SK-N-SH (cell line): ENCODE measurements at regions of chr20 and their contacts with region 1.

Region 1: DNA sequence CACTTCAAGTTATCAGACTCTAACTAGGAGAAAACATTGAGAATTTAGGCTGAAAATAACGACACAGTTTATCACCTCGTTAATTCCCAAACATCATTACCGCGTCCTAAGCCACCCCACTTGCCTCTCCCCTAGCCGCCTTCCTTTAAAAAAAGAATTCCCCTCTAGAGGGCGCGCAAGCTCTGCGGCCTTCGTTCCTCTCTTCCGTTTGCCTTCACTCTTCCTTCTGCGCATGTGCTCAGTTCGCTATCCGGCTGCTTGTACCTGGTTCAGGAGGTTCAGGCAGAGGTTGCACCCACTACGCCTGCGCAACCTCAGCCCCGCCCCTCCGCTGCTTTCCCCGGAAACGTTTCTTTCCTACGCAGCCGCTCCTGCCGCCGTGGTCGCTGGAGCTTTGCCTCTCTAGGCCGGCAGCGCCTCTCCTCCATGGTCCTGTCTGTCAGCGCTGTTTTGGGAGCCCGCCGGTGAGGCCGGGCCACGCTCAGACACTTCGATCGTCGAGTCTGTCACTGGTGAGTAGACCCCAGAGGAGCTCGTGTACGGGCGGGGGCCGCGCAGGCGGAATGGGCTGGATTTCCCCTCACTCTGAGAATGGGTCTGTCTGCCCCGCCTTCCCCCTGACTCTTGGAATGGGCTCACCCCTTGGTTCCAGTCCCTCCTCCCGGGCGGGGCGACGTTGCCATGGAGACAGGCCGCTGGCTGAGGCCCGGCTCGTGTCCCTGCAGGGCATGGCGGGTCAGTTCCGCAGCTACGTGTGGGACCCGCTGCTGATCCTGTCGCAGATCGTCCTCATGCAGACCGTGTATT is at the start of gene SYS1:
- DNase-seq: peak; percentile 96
- H3K4me3 ChIP-seq: peak within 1 kb of the TSS; percentile 80 to 92
- H3K27ac ChIP-seq: peak within 1 kb of the TSS; percentile 91 to 97
- H3K4me1 ChIP-seq: peaks cover 0 to 11% of the 10 kb centered on the region in 2 experiments; a peak in 2 of 4 replicates
- H3K27me3 ChIP-seq: no peaks in the 10 kb centered on the region
- CTCF ChIP-seq: peak; percentile 88
- EP300 ChIP-seq: peak; percentile 13 to 15; a peak in 1 of 4 replicates
- RAD21 ChIP-seq: peak; percentile 87
- polyA plus RNA-seq, gene SYS1: 26.5 and 26.9 TPM in 2 replicates

Region 2: GRCh38 chr20:45322952-45323383 is 40.0 kb before region 1 on chr20:
- CTCF ChIA-PET with region 1: interaction called, 77 read pairs
- POLR2A ChIA-PET with region 1: interaction called, 4 read pairs
- DNase-seq: no peak
- H3K4me3 ChIP-seq: no peak overlapping the region
- H3K27ac ChIP-seq: no peak overlapping the region
- H3K4me1 ChIP-seq: peaks cover 0 to 8% of the 10 kb centered on the region in 2 experiments; a peak in 1 of 4 replicates
- H3K27me3 ChIP-seq: no peaks in the 10 kb centered on the region
- CTCF ChIP-seq: peak; percentile 31; the same call in 1 of the 2 replicates
- EP300 ChIP-seq: no peak
- RAD21 ChIP-seq: peak; percentile 65

Region 3: DNA sequence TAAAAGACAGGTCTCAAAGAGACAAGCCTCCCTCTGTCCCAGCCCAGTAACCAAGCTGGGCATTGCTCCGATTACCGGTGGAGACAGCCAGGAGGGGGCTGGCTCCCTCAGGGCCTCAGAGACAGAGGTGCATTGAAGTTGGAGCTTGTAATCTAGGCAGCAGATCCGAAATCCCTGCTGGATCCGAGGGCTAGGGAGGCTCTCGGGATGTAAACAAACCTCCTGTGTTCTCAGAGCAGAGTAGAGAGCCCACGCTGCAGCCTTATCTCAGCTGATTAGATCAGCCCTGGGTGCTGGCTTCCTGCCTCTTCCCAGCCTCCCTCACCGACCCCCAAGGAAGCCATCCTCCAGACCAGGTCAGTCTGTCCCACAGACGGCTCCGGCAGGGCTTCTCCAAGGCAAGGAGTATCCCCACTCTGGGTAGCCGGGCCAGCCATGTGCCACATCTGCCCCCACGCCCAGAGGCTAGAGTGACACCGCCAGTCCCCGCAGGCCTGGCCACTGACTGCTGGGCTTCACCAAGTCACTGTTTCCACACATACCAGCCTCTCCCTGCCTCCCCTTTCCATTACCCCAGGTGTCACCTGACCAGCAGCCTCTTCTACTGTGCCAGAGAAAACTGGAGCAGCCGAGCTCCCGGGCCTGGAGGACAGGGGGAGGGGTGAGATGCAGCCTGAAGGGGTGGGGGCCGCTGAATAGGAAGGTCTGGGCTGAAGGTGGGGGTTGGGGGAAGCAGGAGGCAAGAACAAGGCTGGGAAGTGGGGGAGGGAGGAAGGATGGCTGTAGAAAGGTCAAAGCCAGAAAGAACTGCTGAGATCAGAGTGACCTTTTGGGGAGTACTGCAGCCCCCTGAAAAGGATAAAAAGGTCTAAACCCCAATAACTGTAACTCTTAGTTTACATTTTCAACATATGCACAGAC is 20.8 kb before region 1 on chr20:
- CTCF ChIA-PET with region 1: interaction called, 31 read pairs
- POLR2A ChIA-PET with region 1: interaction called, 14 read pairs
- DNase-seq: peak; percentile 79
- H3K4me3 ChIP-seq: peak overlapping the region; percentile 27 to 31
- H3K27ac ChIP-seq: peak overlapping the region; percentile 90 to 96
- H3K4me1 ChIP-seq: peaks cover 72 to 74% of the 10 kb centered on the region in 2 experiments
- H3K27me3 ChIP-seq: no peaks in the 10 kb centered on the region
- CTCF ChIP-seq: no peak
- EP300 ChIP-seq: peak in 1 of 2 experiments; percentile 45; a peak in 1 of 4 replicates
- RAD21 ChIP-seq: no peak

Region 4: GRCh38 chr20:45347936-45348778 is 14.8 kb before region 1 on chr20 and contains the start of gene SDC4:
- CTCF ChIA-PET with region 1: interaction called, 31 read pairs
- POLR2A ChIA-PET with region 1: interaction called, 4 read pairs
- DNase-seq: peak; percentile 85
- H3K4me3 ChIP-seq: peak within 1 kb of the TSS; percentile 72 to 87
- H3K27ac ChIP-seq: peak within 1 kb of the TSS; percentile 40 to 60; a peak in 3 of 4 replicates
- H3K4me1 ChIP-seq: peaks cover 40 to 43% of the 10 kb centered on the region in 2 experiments
- H3K27me3 ChIP-seq: no peaks in the 10 kb centered on the region
- CTCF ChIP-seq: no peak
- EP300 ChIP-seq: no peak
- RAD21 ChIP-seq: no peak
- polyA plus RNA-seq, gene SDC4: 131 and 192 TPM in 2 replicates

Region 5: GRCh38 chr20:45406259-45407066 is 43.5 kb after region 1 on chr20:
- CTCF ChIA-PET with region 1: interaction called, 11 read pairs
- POLR2A ChIA-PET with region 1: interaction called, 3 read pairs
- DNase-seq: peak; percentile 80
- H3K4me3 ChIP-seq: peak overlapping the region; percentile 66 to 76
- H3K27ac ChIP-seq: no peak overlapping the region; a peak in 1 of 4 replicates
- H3K4me1 ChIP-seq: peaks cover 0 to 8% of the 10 kb centered on the region in 2 experiments; a peak in 1 of 4 replicates
- H3K27me3 ChIP-seq: no peaks in the 10 kb centered on the region
- CTCF ChIP-seq: no peak
- EP300 ChIP-seq: no peak
- RAD21 ChIP-seq: no peak

Region 6: GRCh38 chr20:45427236-45428149 is 64.5 kb after region 1 on chr20:
- CTCF ChIA-PET with region 1: interaction called, 12 read pairs
- POLR2A ChIA-PET with region 1: interaction called, 11 read pairs
- DNase-seq: peak; percentile 80
- H3K4me3 ChIP-seq: no peak overlapping the region
- H3K27ac ChIP-seq: peak overlapping the region in 1 of 2 experiments; percentile 64; a peak in 2 of 4 replicates
- H3K4me1 ChIP-seq: peaks cover 0 to 20% of the 10 kb centered on the region in 2 experiments; a peak in 1 of 4 replicates
- H3K27me3 ChIP-seq: no peaks in the 10 kb centered on the region
- CTCF ChIP-seq: no peak
- EP300 ChIP-seq: peak in 1 of 2 experiments; percentile 86; a peak in 2 of 4 replicates
- RAD21 ChIP-seq: no peak

Region 7: GRCh38 chr20:45450097-45450818 is 87.3 kb after region 1 on chr20:
- CTCF ChIA-PET with region 1: interaction called, 27 read pairs
- POLR2A ChIA-PET with region 1: no interaction called
- DNase-seq: peak; percentile 41
- H3K4me3 ChIP-seq: no peak overlapping the region
- H3K27ac ChIP-seq: no peak overlapping the region
- H3K4me1 ChIP-seq: no peaks in the 10 kb centered on the region
- H3K27me3 ChIP-seq: peaks cover 17% of the 10 kb centered on the region; the same call in 1 of the 2 replicates
- CTCF ChIP-seq: peak; percentile 71
- EP300 ChIP-seq: no peak
- RAD21 ChIP-seq: peak; percentile 63

Region 8: DNA sequence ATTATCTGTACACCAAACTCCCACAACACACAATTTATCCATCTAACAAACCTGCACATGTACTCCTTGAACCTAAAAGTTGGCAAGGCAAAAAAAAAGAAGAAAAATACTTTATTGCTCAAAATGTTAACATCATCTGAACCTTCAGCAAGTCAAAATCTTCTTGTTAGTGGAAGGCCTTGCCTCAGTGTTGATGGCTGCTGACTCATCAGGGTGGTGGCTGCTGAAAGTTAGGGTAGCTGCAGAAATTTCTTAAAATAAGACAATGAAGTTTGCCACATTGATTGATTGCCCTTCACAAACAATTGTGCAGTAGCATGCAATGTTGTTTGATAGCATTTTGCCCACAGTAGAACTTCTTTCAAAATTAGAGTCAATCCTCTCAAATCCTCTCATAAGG is 309.8 kb after region 1 on chr20:
- CTCF ChIA-PET with region 1: no interaction called
- POLR2A ChIA-PET with region 1: no interaction called
- DNase-seq: no peak
- H3K4me3 ChIP-seq: no peak overlapping the region
- H3K27ac ChIP-seq: no peak overlapping the region
- H3K4me1 ChIP-seq: no peaks in the 10 kb centered on the region
- H3K27me3 ChIP-seq: no peaks in the 10 kb centered on the region
- CTCF ChIP-seq: no peak
- EP300 ChIP-seq: no peak
- RAD21 ChIP-seq: no peak